Activated naive CD4-positive, alpha-beta T cell treated with anti-CD3 and anti-CD28 coated beads for 36 hours (primary cell): ENCODE measurements at regions of chr18 and their contacts with region 1.

Region 1: DNA sequence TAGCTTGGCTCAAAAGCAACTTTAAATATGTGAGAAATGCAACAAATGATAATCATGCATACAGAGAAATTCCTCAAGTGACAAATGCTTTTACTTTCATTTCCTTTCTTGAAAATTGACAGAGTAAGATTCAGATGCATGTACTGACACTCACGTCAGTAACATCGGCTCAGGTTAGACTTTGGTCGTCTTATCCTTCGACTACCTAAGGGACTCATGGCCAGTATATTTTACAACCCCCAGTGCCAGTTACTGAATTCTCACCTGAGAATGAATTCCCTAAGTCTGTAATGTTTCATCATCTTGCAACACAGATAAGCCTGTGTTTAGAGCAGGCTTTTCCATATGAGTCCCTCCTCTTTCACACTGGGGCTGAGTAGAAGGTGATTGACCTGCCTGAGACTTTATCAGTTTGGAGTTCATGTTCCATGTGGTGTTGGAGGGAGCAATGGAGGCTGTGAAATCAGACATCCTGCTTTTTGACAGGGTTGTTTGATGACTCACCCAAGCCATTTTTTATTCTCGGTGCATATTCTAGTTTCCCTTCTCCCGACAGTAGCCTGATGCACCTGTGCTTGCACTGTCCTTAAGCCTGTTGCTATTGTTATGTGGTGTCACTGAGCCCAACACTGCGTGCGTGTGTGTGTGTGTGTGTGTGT is 30.5 kb upstream of the ATP8B1 start:
- DNase-seq: peak; percentile 66
- H3K4me3 Mint-ChIP-seq: peak overlapping the region; percentile 49
- H3K27ac Mint-ChIP-seq: peak overlapping the region; percentile 81
- H3K4me1 Mint-ChIP-seq: peaks cover 36% of the 10 kb centered on the region
- H3K27me3 Mint-ChIP-seq: peaks cover 15% of the 10 kb centered on the region

Region 2: DNA sequence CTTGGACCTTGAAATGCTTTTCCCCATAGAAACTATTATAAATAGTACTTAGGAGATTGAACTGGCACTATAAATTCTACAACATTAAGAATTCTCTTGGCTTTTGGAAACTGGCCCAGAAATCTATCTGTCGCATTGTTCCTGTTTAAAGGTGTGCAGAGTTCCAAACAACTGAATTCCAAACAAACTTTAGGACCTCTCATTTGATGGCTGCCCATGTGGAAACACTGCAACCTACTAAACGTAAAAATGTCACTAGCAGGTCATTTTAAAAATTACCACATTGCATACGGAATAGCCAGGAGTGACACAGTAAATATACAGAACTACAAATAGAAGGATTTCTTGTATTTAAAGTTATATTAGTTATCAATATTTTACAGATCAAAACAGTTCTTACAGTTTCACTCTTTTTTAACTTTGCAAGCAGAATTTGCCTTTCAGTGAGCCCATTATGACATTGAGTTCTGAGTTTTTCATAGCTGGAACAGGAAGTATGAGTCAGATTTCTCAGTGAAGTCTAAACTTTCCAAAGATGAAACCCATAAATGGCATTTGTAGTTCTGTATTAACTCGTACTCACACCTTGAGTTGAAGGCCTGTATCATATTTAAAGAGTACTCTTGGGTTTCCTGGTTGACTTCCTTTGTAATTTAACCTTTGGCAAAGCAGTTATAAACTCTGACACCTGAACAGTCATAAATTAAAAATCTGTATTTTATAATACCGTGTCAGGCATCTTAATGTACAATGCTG is 829.0 kb before region 1 on chr18:
- CTCF ChIA-PET with region 1: no interaction called
- intact Hi-C with region 1: loop called (anchors 5 kb)
- DNase-seq: no peak
- H3K4me3 Mint-ChIP-seq: no peak overlapping the region
- H3K27ac Mint-ChIP-seq: no peak overlapping the region
- H3K4me1 Mint-ChIP-seq: peaks cover 23% of the 10 kb centered on the region
- H3K27me3 Mint-ChIP-seq: no peaks in the 10 kb centered on the region

Region 3: GRCh38 chr18:57630002-57630753 is 203.4 kb before region 1 on chr18:
- CTCF ChIA-PET with region 1: interaction called, 5 read pairs
- intact Hi-C with region 1: loop called (anchors 1 kb)
- DNase-seq: peak; percentile 97
- H3K4me3 Mint-ChIP-seq: peak overlapping the region; percentile 95
- H3K27ac Mint-ChIP-seq: peak overlapping the region; percentile 92
- H3K4me1 Mint-ChIP-seq: peaks cover 14% of the 10 kb centered on the region
- H3K27me3 Mint-ChIP-seq: no peaks in the 10 kb centered on the region

Region 4: DNA sequence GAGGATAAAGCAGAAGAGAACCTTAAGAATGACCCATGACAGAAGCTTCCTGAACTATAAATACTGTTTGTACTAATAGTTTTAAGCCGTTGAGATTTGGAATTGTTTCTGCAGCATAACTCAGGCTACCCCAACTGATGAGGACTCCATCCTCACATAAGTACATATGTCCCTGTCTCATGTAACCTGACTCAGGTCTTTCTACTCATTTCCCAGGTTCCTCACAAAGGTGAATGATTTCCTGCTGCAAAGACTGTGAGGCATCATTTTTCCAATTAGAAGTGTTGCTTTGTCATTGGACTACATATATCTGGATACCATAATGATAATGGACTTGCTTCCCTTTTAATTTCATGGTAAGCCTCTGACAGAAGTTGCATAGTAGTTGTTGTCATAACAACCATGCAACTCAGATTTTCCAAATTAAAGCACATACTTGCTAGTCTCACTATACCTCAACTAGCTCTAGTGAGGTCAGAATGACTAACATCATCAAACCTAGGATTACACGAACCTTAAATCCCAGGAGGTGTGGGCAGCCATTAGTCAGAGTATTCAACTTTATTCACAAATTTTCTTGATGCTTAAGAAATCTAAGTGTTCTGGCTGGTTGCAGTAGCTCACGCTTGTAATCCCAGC is 172.4 kb after region 1 on chr18:
- CTCF ChIA-PET with region 1: no interaction called
- intact Hi-C with region 1: loop called (anchors 1 kb)
- DNase-seq: peak; percentile 6
- H3K4me3 Mint-ChIP-seq: no peak overlapping the region
- H3K27ac Mint-ChIP-seq: no peak overlapping the region
- H3K4me1 Mint-ChIP-seq: no peaks in the 10 kb centered on the region
- H3K27me3 Mint-ChIP-seq: peaks cover 24% of the 10 kb centered on the region

Region 5: GRCh38 chr18:58699551-58699950 is 866.0 kb after region 1 on chr18:
- CTCF ChIA-PET with region 1: no interaction called
- intact Hi-C with region 1: loop called (anchors 1 kb)
- DNase-seq: no peak
- H3K4me3 Mint-ChIP-seq: no peak overlapping the region
- H3K27ac Mint-ChIP-seq: no peak overlapping the region
- H3K4me1 Mint-ChIP-seq: peaks cover 50% of the 10 kb centered on the region
- H3K27me3 Mint-ChIP-seq: no peaks in the 10 kb centered on the region